Gastrocnemius medialis (tissue), 4 donors: ENCODE measurements at regions of chr6 and their contacts with region 1.

Region 1: DNA sequence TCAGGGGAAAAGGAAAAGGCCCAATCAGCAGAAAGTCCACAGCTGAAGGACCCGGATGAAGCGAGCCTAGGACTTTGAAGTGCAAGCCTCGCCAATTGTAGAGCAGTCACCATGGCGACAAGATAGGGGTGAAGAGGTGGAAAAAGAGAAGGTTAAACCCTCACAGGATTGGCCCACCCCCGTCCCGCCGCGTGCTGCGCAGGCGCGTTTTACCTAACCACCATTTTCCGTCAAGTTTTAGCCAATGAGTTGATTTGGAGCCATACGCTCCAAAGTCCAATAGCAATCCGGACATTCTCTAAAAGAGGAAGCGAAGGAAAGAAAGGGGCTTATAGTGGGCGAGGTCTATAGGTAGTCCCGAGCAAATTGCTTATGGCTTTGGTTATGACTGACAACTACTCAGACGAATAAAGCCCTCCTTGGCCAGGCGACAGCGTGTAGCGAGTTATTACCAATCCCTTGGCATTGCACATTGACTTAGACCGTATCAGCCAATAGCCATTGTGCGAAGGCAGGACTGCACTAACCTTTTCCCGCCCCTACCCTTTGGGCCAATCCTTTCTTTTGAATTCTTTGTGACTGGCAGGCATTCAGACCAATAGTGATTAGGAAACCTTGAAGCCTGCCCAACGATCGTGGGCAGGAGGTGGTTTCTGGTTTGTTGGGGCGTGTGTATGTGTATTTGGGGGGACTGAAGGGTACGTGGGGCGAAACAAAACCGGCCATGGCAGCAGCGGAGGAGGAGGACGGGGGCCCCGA is at the start of gene RNF5:
- DNase-seq: peak; percentile 98 to 99
- ATAC-seq: peak; percentile 84 to 88
- H3K4me3 ChIP-seq: peak within 1 kb of the TSS; percentile 81 to 99 (median 96)
- H3K27ac ChIP-seq: peak within 1 kb of the TSS; percentile 92 to 99 (median 96)
- H3K4me1 ChIP-seq: peaks cover 41 to 46% of the 10 kb centered on the region in 2 donors
- H3K27me3 ChIP-seq: no peaks in the 10 kb centered on the region
- CTCF ChIP-seq: no peak
- POLR2A ChIP-seq: peak; percentile 46 to 63
- total RNA-seq, gene RNF5: 54.6 to 98.3 (median 78.1) TPM

Region 2: GRCh38 chr6:31665501-31666336 is 512.2 kb before region 1 on chr6 and contains the start of gene CSNK2B:
- in situ Hi-C with region 1: loop called in 2 of 4 experiments (anchors 25 kb)
- intact Hi-C with region 1: loop called (anchors 5 kb)
- DNase-seq: peak; percentile 99
- ATAC-seq: peak; percentile 86
- H3K4me3 ChIP-seq: peak within 1 kb of the TSS; percentile 83 to 98 (median 94)
- H3K27ac ChIP-seq: peak within 1 kb of the TSS; percentile 93 to 100 (median 97)
- H3K4me1 ChIP-seq: peaks cover 25 to 36% of the 10 kb centered on the region in 2 donors
- H3K27me3 ChIP-seq: no peaks in the 10 kb centered on the region
- CTCF ChIP-seq: peak in 1 of 5 experiments; percentile 19
- POLR2A ChIP-seq: peak; percentile 72
- total RNA-seq, gene CSNK2B: 185 to 251 (median 226) TPM

Region 3: GRCh38 chr6:31958741-31959739 is 218.9 kb before region 1 on chr6 and contains the starts of genes NELFE and SKIC2:
- in situ Hi-C with region 1: loop called in 1 of 4 experiments (anchors 25 kb)
- intact Hi-C with region 1: no loop called
- DNase-seq: peak; percentile 95 to 98
- ATAC-seq: peak; percentile 98 to 99
- H3K4me3 ChIP-seq: peak within 1 kb of the TSS; percentile 82 to 94 (median 88)
- H3K27ac ChIP-seq: peak within 1 kb of the TSS; percentile 82 to 89 (median 87)
- H3K4me1 ChIP-seq: peaks cover 17 to 20% of the 10 kb centered on the region in 2 donors
- H3K27me3 ChIP-seq: no peaks in the 10 kb centered on the region
- CTCF ChIP-seq: no peak
- POLR2A ChIP-seq: peak; percentile 72 to 76
- total RNA-seq, gene NELFE: 58.1 to 88.6 (median 78.7) TPM
- total RNA-seq, gene SKIC2: 21.2 to 51.9 (median 22.7) TPM

Region 4: DNA sequence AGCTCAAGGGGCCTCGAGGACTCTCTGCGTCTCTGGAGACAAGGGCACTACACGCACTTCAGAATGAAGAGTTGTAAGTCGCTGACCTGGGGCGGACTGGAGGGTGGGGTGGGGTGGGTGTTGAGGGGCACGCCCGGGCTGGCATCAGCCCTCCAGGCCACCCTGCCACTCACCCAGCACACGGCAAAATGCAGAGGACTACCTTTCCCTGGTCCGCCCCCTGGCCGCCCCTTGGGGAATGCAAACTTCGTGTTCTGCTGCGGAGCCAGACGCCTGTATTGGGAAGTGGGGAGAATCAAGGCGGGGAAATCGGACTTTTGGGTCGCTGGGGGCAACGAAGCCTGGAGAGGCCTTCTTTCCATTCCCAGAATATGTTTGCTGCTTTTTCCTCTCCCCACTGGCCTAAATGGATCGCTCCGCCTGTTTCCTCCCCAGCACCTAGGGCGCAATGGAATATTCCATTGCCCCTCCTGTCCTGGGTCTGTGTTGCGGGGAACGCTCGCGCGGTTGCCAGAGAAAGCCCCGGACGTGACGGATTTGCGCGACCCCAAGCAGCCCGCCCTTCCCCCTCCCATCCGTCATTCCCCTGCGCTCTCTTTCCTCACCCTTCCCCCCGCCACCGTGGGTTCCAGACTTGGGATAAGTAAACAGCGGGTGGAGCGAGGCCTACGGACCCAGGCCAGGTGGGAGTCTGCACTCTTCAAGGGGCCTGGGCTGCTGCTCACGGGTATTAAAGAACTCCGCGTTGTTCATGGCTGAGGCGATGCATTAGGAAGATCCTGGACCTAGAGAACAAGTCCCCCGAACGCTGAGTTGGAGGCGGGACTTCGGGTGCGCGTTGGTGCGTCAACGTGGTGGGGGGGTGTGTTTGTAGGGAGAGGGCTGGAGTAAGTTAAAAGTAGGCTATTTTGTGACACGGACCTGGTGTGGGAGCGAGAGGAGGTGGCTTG is 24.1 kb before region 1 on chr6 and contains the start of gene PPT2:
- in situ Hi-C with region 1: no loop called
- intact Hi-C with region 1: loop called (anchors 1 kb)
- DNase-seq: peak; percentile 80 to 85
- ATAC-seq: peak; percentile 85 to 86
- H3K4me3 ChIP-seq: peak within 1 kb of the TSS; percentile 77 to 97 (median 84)
- H3K27ac ChIP-seq: peak within 1 kb of the TSS; percentile 77 to 93 (median 87)
- H3K4me1 ChIP-seq: peaks cover 25 to 29% of the 10 kb centered on the region in 2 donors
- H3K27me3 ChIP-seq: peaks cover 7 to 19% (median 8%) of the 10 kb centered on the region in 3 donors
- CTCF ChIP-seq: peak in 2 of 5 experiments; percentile 14 to 15
- POLR2A ChIP-seq: peak; percentile 23 to 38
- total RNA-seq, gene PPT2: 16.2 to 72.7 (median 21.4) TPM

Region 5: DNA sequence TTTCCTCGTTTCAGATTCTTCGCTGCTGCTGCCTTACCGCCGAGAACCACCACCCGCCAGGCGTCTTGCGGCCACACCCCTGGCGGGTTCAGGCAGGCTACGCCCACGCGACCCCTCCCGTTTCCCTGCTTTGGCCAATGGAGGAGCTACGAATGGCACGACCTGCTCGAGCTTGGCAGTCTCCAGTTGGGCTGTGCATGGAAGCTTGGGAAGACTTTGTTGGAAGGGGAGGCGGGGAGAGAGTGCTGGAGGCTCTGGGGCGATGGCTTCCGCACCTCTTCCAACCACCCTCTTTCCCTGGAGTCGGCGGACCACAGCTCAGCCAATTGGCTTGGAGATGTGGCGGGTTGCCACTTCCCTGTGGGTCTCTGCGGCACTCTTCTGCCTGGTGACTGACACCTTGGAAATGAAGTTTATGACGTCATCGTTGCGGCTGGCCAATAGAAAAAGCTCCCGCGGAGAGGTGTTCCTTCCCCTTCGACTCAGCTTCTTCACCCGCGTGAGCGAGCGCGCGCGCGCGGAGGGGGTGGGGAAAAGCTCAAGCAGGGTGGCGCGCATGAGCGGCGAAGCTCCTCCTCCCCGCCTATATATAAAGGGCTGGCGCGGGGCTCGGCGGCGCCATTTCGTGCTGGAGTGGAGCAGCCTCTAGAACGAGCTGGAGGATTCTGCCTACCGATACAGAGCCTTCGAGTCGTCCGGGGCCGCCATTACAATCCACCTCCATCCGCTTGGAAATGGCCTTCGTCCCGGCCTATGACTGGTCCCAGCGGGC is 793.8 kb after region 1 on chr6:
- in situ Hi-C with region 1: loop called in 3 of 4 experiments (anchors 25 kb)
- intact Hi-C with region 1: loop called (anchors 5 kb)
- DNase-seq: peak; percentile 100
- ATAC-seq: peak; percentile 59 to 67
- H3K4me3 ChIP-seq: peak overlapping the region; percentile 95 to 97 (median 96)
- H3K27ac ChIP-seq: peak overlapping the region; percentile 97 to 100 (median 100)
- H3K4me1 ChIP-seq: peaks cover 34% of the 10 kb centered on the region in 2 donors
- H3K27me3 ChIP-seq: no peaks in the 10 kb centered on the region
- CTCF ChIP-seq: peak in 1 of 5 experiments; percentile 17
- POLR2A ChIP-seq: peak; percentile 99